ENCODE measurements at regions of chr4 and their contacts with region 1.

Region 1: DNA sequence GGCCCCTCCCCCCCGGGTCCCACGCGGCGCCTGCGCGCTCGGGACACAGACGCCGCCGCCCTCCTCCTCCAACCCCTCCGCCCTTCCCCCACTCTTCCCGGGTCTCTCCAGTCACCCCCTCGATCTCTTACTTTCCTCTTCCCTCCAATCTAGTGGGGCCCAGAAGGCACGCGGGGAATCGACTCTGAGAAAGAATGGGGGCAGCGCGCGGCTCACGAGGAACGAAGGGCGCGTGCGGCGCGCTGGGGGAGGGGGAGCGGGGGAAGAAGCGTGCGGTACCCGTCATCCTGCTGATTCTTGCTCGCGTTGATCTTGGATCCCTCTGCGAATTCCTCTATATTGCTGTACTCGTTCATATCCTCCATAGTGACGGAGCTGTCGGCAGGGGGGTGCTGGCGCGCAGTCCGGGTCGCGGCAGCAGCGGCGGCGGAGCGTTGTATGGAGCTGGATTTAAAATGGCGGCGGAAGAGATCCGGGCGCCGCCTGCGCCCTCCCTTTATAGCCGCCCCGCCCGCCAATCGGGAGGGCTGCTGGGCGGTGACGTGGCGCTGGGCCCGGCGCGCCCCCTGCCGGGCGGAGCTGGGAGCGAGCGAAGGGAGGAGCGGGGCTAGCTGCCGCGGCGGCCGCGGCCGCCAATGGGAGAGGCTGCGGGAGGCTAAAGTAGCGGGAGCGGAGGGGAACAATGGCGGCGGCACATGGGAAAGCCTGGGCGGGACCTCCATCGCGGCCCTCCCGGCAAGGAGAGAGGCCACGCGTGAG is 1.1 kb downstream of the HNRNPDL start:
- DNase-seq: peak; percentile 92
- H3K4me3 ChIP-seq: peak overlapping the region; percentile 99
- H3K27ac ChIP-seq: peak overlapping the region; percentile 90
- H3K4me1 ChIP-seq: peaks cover 53% of the 10 kb centered on the region
- CTCF ChIP-seq: peak; percentile 84

Region 2: DNA sequence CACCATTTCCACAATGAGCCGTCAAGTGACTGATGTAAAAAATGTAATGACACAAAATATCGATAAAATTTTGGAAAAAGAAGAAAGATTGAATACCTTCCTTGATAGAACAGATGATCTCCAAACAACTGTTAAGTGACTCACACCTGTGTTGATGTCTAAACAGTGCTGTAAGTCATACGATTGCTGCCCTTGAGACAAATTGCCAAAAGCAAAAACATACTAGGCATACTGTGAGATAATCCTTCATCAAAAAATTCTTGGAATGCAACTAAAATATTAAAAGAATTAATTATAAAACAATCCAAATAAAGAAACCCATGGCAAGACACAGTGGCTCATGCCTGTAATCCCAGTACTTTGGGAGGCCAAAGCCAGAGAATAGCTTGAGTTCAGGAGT is 108.8 kb before region 1 on chr4:
- CTCF ChIA-PET with region 1: no interaction called
- POLR2A ChIA-PET with region 1: no interaction called
- intact Hi-C with region 1: no loop called
- DNase-seq: no peak
- H3K4me3 ChIP-seq: no peak overlapping the region
- H3K27ac ChIP-seq: no peak overlapping the region
- H3K4me1 ChIP-seq: peaks cover 4% of the 10 kb centered on the region
- CTCF ChIP-seq: no peak

Region 3: DNA sequence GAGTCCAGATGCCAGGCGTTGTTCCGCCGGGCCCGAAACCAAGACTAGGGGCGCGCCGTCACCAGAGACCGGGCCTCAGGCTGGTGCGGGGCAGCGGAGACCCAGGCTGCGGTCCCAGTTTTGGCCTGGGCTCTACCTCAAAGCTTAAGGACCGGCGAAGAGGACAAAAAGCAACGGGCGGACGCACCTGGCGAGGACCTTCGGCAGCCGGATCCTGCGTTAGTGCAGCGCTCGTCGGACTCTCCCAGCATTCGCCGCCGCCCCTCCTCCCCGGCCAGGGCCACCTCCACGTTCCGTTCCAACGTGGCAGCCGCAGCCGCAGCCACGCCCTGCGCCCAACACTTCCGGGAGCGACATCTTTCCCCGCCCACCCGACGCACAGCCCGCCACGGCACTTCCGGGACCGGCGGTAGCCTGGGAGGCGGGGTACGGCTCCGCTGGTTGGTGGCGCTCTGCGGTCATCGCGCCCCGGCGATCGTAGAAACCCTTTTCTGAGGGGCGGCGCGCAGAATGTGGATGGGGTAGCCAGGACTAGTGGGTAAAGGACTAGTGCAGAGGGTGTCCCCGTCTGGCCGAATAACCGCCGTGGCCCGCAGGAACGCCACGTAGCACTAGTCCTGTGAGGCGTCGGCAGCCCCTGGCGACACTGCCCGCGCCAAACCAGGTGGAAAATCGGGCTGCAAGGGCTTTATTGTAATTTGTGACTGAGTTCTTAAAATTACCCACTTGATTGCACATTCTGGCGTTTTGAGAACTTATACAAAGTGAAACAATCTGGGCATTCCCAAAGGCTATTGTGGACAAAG is 462.0 kb after region 1 on chr4 and contains the start of gene SEC31A:
- CTCF ChIA-PET with region 1: no interaction called
- POLR2A ChIA-PET with region 1: no interaction called
- intact Hi-C with region 1: loop called (anchors 5 kb)
- DNase-seq: peak; percentile 97
- H3K4me3 ChIP-seq: peak within 1 kb of the TSS; percentile 80
- H3K27ac ChIP-seq: peak within 1 kb of the TSS; percentile 84
- H3K4me1 ChIP-seq: peaks cover 53% of the 10 kb centered on the region
- CTCF ChIP-seq: peak; percentile 44
- total RNA-seq, gene SEC31A: 80.0 and 93.4 TPM in 2 replicates

Measured in OCI-LY7 (cell line).